Aorta (tissue), 5 donors: ENCODE measurements at regions of chr10 and their contacts with region 1.

Region 1: GRCh38 chr10:123891133-123892071 is at the start of gene CPXM2:
- DNase-seq: peak; percentile 71 to 81
- ATAC-seq: peak; percentile 60
- H3K4me3 ChIP-seq: peak within 1 kb of the TSS; percentile 88 to 91
- H3K27ac ChIP-seq: peak within 1 kb of the TSS; percentile 79 to 94
- H3K4me1 ChIP-seq: no peaks in the 10 kb centered on the region
- H3K27me3 ChIP-seq: no peaks in the 10 kb centered on the region
- total RNA-seq, gene CPXM2: 116 to 169 TPM

Region 2: DNA sequence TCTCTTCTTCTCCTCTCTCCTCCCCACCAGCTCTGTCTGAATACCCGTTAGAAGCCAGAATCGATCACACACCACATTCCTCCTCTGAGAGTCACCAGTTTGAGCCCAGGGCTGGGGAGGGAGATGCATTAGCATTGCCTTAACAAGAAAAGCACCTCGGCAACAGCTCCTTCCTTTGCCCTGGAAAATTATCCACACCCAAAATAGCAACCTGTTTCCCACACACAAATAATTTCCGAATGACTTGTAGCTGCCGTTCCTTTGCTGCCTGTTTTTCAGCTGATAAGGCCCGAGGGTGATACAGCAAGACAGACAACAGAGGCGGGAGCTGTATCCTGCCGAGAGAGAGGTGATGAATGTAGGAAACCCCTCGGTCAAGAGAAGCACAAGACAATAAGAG is 91.1 kb before region 1 on chr10:
- intact Hi-C with region 1: loop called (anchors 5 kb)
- DNase-seq: no peak
- ATAC-seq: peak; percentile 68
- H3K4me3 ChIP-seq: peak overlapping the region in 1 of 2 donors; percentile 28
- H3K27ac ChIP-seq: peak overlapping the region; percentile 85 to 90
- H3K4me1 ChIP-seq: peaks cover 0 to 4% of the 10 kb centered on the region in 2 donors
- H3K27me3 ChIP-seq: no peaks in the 10 kb centered on the region

Region 3: DNA sequence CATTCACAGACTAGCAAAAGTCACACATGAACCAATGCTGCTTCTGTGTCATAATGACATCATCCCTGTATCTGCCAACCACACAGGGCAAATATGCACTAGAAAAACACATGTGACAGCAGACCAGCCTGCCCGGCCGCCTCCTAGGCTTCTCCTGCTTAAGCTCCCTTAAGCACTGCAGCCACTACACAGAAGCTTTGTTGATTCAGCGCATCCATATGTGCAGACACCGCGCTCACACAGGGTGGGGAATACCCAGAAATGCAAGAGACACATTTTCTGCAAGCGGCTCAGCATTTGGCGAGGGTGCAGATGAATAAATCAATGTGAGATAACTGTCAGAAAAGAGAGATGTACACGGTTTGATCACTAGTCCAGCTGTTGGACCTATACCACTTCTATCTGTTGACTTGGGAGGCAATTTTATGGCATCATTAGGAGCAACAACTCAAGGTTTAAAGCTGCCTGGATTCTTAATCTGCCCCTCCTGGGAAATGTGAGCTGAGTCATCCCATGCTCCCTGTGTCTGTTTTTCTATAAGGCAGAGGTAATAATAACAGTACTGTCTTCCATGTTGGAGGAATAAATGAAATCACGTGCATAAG is 33.2 kb before region 1 on chr10:
- intact Hi-C with region 1: loop called (anchors 5 kb)
- DNase-seq: peak in 1 of 2 donors; percentile 60
- ATAC-seq: peak; percentile 63
- H3K4me3 ChIP-seq: no peak overlapping the region
- H3K27ac ChIP-seq: no peak overlapping the region
- H3K4me1 ChIP-seq: peaks cover 0 to 3% of the 10 kb centered on the region in 2 donors
- H3K27me3 ChIP-seq: no peaks in the 10 kb centered on the region

Region 4: DNA sequence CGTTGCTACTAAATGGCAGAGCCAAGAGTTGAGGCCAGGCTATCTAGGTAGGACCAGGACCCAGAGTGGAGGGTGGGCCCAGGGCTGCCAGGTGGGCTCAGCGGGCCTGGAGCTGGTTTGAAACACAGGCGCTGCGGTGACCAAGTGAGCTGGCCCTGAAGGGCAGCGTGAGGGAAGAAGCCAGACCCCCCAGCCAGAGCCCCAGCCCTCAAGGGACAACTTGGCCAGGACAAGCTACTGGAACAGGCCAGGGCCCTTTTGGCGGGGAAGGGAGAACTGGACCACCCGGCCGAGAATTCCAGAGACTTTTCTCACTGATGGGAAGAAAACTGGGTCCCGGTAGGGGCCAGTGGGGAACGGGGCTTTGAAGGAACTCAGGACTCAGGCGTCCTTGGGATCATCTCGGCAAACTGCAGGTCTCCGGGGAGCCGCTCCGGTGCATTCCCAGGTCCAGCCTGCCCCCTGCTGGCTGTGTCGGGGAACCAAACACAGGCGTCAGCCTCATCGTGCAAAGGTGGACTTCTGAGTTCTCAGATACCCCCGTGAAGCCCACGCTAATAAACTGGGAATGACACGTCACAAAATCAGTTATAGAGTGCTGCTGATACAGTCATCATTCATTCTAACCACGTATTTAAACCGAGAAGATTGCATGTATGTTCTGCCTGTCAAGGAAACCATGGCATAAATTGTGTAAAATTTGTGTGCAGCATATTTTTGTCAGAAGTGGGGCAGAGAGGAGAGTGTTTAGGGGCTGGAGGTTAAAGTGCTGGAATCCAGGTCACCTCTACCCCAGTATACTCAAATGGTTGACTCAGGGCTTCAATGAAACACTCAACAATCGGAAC is 76.2 kb after region 1 on chr10:
- intact Hi-C with region 1: loop called in 1 of 2 experiments (anchors 5 kb)
- DNase-seq: peak; percentile 82 to 93
- ATAC-seq: peak; percentile 89
- H3K4me3 ChIP-seq: no peak overlapping the region
- H3K27ac ChIP-seq: no peak overlapping the region
- H3K4me1 ChIP-seq: no peaks in the 10 kb centered on the region
- H3K27me3 ChIP-seq: no peaks in the 10 kb centered on the region